ENCODE measurements at regions of chr9 and their contacts with region 1.

Region 1: DNA sequence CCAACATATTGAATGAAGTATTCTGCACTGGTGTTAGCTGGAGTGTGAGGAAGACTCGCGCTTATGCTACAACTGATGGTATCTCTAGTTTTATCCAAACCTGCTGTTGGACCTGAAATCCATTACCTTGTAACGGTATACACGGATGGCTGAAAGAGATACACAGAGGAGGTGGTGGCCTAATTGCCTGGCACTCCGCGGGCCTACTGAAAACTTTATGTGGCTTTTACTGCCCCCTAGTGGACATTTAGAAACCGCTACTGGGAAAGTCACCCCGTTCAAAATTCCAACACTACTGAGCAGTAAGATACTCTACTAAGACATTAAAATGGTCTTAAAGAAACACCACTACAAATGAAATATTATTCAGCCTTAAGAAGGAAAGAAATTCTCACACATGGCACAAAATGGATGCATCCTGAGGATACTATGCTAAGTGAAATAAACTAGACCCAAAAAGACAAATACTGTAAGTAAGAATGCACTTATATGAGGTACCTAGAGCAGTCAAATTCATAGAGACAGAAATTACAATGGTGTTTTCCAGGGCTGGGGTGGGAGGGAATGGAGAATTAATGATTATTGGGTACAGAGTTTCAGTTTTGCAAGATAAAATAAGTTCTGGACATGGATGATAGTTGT is 100.4 kb downstream of the TTLL11 start:
- DNase-seq: peak; percentile 31 to 61 (median 51)
- H3K4me3 ChIP-seq: no peak overlapping the region
- H3K4me3 Mint-ChIP-seq: no peak overlapping the region
- H3K27ac ChIP-seq: no peak overlapping the region
- H3K27ac Mint-ChIP-seq: no peak overlapping the region
- H3K4me1 ChIP-seq: no peaks in the 10 kb centered on the region
- H3K4me1 Mint-ChIP-seq: no peaks in the 10 kb centered on the region
- H3K27me3 ChIP-seq: no peaks in the 10 kb centered on the region
- H3K27me3 Mint-ChIP-seq: peaks cover 0 to 1% (median 0%) of the 10 kb centered on the region in 3 donors
- CTCF ChIP-seq: peak; percentile 83

Region 2: DNA sequence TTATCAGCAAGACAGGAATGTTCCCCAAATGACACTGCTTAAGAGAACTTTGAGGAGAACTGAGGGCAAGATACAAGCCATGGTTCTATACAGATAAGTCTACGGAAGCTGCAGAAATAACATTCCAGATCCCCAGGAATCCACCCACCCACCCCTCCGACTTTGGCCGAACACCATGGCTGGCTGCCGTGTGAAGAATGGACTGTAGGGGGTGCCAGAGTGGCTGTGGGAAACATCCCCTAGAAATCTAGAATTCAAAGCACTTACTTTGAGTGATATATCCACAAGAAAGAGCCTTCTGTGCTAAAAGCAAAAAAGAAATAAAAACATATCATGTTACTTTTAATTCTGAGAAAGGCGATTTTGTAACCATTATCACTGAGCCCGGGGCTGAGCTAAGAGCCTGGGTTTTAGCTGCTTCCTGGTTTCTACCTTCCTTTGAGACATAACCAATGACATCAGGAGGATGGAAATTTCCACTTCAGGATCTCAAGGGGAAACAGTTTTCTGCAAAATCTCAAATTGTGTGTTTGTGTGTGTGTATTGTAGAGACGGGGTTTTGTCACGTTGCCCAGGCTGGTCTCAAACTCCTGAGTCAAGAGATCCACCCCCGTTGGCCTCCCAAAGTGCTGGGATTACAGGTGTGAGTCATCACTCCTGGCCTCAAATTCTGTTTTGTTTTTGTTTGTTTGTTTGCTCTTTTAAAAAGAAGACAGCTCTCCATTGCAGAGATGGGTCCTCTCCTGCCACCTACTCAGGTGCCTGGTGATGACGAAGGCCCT is 529.5 kb before region 1 on chr9:
- intact Hi-C with region 1: loop called in 1 of 2 experiments (anchors 10 kb)
- DNase-seq: peak; percentile 10 to 34 (median 30)
- H3K4me3 ChIP-seq: no peak overlapping the region
- H3K4me3 Mint-ChIP-seq: no peak overlapping the region
- H3K27ac ChIP-seq: no peak overlapping the region
- H3K27ac Mint-ChIP-seq: no peak overlapping the region
- H3K4me1 ChIP-seq: no peaks in the 10 kb centered on the region
- H3K4me1 Mint-ChIP-seq: no peaks in the 10 kb centered on the region
- H3K27me3 ChIP-seq: peaks cover 0 to 27% of the 10 kb centered on the region in 2 donors
- H3K27me3 Mint-ChIP-seq: peaks cover 6 to 8% (median 6%) of the 10 kb centered on the region in 3 donors
- CTCF ChIP-seq: peak; percentile 87

Region 3: DNA sequence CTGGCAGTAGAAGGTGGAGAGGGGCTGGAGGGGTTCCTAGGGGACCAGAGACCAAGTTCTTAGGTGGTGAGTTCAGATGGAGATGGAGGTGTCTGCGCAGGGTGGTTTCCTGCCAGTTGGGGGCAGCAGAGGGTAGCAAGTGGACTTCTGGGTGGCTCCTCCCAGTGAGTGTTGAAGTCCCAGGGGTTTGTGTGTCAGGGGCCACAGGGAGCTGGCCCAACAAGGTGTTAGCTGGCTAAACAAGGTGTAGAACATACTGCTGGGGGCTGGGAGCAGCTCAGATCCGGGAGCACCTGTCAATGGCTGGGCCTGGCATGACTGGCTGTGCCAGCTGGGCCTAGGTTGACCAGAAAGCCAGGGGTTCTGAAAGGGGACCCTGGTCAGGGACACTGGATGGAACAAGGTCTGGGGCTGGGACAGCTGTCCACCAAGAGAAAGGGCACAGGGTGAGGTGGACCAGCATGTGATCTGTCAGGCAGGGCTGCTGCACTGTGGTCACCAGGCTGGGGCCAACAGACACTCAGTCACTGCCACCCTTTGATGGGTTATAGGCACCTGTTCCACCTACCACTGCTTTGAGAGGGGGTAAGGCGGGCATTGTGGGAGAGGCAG is 305.7 kb before region 1 on chr9:
- intact Hi-C with region 1: loop called (anchors 2 to 5 kb)
- DNase-seq: peak; percentile 18 to 48 (median 33)
- H3K4me3 ChIP-seq: no peak overlapping the region
- H3K4me3 Mint-ChIP-seq: no peak overlapping the region
- H3K27ac ChIP-seq: no peak overlapping the region
- H3K27ac Mint-ChIP-seq: peak overlapping the region in 1 of 7 donors; percentile 6
- H3K4me1 ChIP-seq: no peaks in the 10 kb centered on the region
- H3K4me1 Mint-ChIP-seq: no peaks in the 10 kb centered on the region
- H3K27me3 ChIP-seq: peaks cover 0 to 7% of the 10 kb centered on the region in 2 donors
- H3K27me3 Mint-ChIP-seq: peaks cover 12 to 47% (median 21%) of the 10 kb centered on the region in 3 donors
- CTCF ChIP-seq: peak; percentile 82

Region 4: DNA sequence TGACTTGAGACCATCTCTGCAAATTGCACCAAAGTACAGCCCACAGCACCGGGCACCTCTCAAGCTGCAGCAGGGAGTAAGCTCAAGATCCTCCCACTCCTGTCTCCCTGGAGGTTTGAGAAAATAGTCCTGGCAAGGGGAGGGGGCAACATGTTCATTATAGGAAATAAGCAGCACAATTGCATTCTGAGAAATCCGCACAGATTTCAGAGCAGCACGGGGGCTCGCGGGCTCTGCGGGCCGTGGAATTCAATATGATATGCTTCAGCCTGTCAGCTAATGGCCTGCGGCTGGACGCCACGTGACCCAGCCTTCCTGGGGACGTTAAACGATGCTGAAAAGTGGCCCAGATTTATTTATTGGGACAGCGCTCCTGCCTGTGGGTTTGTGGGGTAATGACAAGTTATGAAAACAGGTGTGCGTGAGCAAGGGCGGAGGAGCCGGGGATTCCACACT is 184.8 kb before region 1 on chr9:
- intact Hi-C with region 1: no loop called
- DNase-seq: no peak
- H3K4me3 ChIP-seq: no peak overlapping the region
- H3K4me3 Mint-ChIP-seq: no peak overlapping the region
- H3K27ac ChIP-seq: no peak overlapping the region
- H3K27ac Mint-ChIP-seq: no peak overlapping the region
- H3K4me1 ChIP-seq: no peaks in the 10 kb centered on the region
- H3K4me1 Mint-ChIP-seq: no peaks in the 10 kb centered on the region
- H3K27me3 ChIP-seq: no peaks in the 10 kb centered on the region
- H3K27me3 Mint-ChIP-seq: peaks cover 0 to 3% (median 2%) of the 10 kb centered on the region in 3 donors
- CTCF ChIP-seq: no peak

Region 5: DNA sequence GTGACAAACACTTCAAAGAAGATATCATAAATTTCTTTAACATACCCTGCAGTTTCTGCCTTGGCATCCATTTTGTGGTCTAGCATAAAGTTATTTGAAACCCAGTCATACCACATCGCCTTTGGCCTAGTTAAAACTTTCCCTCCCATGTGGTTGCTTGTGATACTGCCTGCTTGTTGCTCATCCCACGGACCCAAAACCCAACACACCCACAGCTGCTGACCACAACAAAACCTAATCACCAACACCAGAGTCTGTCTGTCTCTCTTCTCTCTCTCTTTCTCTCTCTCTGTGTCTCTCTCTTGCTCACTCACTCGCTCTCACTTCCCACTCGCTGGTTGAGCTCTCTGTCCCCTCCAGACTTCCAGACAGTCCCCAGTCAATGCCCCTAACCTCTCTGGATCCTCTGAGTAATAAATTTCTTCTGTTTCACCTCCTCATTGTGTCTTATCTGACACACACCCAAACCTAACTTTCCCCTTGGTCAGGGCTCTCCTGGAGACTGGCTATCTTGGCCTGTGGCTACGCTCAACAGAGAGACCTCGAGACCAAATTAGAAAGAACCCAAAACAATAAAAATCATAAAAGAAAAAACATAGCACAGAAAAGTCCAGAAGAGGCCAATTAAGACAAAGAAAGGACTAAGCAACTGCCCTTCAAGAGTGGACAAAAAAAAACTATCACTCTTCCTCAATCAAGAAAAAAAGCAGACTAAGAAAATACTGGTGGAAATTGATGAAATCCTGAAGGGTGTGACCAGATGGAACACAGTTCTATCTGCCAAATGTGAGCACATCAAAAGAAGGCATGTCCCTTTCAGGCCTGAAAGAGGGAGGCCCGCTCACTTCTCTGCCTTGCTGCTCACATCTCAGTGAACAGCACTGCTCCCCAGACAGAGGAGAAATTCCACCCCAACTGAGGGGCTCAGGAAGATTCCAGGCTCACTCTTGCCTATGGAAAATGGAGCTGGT is 58.9 kb after region 1 on chr9:
- intact Hi-C with region 1: no loop called
- DNase-seq: no peak
- H3K4me3 ChIP-seq: no peak overlapping the region
- H3K4me3 Mint-ChIP-seq: no peak overlapping the region
- H3K27ac ChIP-seq: no peak overlapping the region
- H3K27ac Mint-ChIP-seq: peak overlapping the region in 1 of 7 donors; percentile 9
- H3K4me1 ChIP-seq: peaks cover 5 to 8% of the 10 kb centered on the region in 2 donors
- H3K4me1 Mint-ChIP-seq: peaks cover 9% of the 10 kb centered on the region
- H3K27me3 ChIP-seq: no peaks in the 10 kb centered on the region
- H3K27me3 Mint-ChIP-seq: peaks cover 0 to 2% (median 0%) of the 10 kb centered on the region in 3 donors
- CTCF ChIP-seq: no peak